ENCODE measurements at regions of chr17 and their contacts with region 1.

Region 1: GRCh38 chr17:58631523-58632323 is 60.1 kb downstream of the TEX14 start:
- DNase-seq: peak; percentile 88
- H3K4me3 ChIP-seq: peak overlapping the region; percentile 43 to 48
- H3K27ac ChIP-seq: peak overlapping the region; percentile 78 to 92
- H3K4me1 ChIP-seq: peaks cover 0 to 5% of the 10 kb centered on the region in 2 experiments; a peak in 1 of 4 replicates
- H3K27me3 ChIP-seq: no peaks in the 10 kb centered on the region
- CTCF ChIP-seq: peak; percentile 41
- EP300 ChIP-seq: peak; percentile 60 to 67; a peak in 3 of 4 replicates
- RAD21 ChIP-seq: peak; percentile 49

Region 2: DNA sequence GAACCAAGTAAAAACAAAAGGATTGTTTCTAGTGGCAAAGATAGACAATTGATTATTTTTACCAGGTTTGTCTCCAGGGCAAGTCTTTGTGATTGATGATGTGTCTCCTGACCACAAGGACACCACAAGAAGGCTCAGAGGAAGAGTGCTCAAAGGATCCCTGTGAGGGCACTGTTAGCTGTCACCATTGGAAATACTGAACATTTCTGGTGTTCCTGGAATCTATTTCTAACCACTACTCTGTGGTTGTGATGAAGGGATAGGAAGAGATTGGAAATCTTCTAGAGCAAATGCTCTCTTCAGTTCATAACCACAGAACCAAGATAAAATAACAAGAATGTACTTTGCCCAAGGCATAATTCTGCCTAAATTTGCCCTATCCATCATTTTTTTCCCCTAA is 229.7 kb before region 1 on chr17:
- CTCF ChIA-PET with region 1: no interaction called
- POLR2A ChIA-PET with region 1: no interaction called
- DNase-seq: no peak
- H3K4me3 ChIP-seq: no peak overlapping the region
- H3K27ac ChIP-seq: no peak overlapping the region
- H3K4me1 ChIP-seq: no peaks in the 10 kb centered on the region
- H3K27me3 ChIP-seq: peaks cover 28% of the 10 kb centered on the region
- CTCF ChIP-seq: no peak
- EP300 ChIP-seq: no peak
- RAD21 ChIP-seq: no peak

Region 3: GRCh38 chr17:58531661-58532554 is 99.8 kb before region 1 on chr17:
- CTCF ChIA-PET with region 1: interaction called, 5 read pairs
- POLR2A ChIA-PET with region 1: interaction called, 11 read pairs
- DNase-seq: peak; percentile 95
- H3K4me3 ChIP-seq: peak overlapping the region; percentile 59 to 74
- H3K27ac ChIP-seq: no peak overlapping the region
- H3K4me1 ChIP-seq: peaks cover 5 to 21% of the 10 kb centered on the region in 2 experiments; a peak in 2 of 4 replicates
- H3K27me3 ChIP-seq: no peaks in the 10 kb centered on the region
- CTCF ChIP-seq: no peak
- EP300 ChIP-seq: no peak
- RAD21 ChIP-seq: no peak

Region 4: DNA sequence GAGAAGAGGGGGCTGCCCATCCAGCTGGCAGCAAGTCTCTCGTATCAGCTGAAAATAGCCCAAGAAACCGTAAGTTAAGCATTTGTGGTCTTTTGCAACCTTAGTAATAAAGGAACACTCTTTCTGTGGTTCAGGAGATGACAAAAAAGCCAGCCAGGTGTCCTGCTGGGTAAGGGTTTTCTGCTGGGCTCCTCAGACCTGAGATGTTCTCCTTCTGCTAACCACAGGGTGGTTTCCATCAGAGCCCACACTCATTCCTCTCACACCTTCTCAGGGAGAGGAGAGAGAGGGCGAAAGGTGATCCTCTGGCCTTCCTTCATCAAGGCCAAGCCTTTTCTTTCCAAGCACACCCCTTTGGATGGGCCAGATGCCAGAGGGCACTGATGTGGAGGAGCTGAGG is 10.5 kb before region 1 on chr17:
- CTCF ChIA-PET with region 1: interaction called, 6 read pairs
- POLR2A ChIA-PET with region 1: interaction called, 12 read pairs
- DNase-seq: no peak
- H3K4me3 ChIP-seq: no peak overlapping the region
- H3K27ac ChIP-seq: no peak overlapping the region
- H3K4me1 ChIP-seq: no peaks in the 10 kb centered on the region
- H3K27me3 ChIP-seq: peaks cover 10% of the 10 kb centered on the region; the same call in 1 of the 2 replicates
- CTCF ChIP-seq: no peak
- EP300 ChIP-seq: no peak
- RAD21 ChIP-seq: no peak

Region 5: DNA sequence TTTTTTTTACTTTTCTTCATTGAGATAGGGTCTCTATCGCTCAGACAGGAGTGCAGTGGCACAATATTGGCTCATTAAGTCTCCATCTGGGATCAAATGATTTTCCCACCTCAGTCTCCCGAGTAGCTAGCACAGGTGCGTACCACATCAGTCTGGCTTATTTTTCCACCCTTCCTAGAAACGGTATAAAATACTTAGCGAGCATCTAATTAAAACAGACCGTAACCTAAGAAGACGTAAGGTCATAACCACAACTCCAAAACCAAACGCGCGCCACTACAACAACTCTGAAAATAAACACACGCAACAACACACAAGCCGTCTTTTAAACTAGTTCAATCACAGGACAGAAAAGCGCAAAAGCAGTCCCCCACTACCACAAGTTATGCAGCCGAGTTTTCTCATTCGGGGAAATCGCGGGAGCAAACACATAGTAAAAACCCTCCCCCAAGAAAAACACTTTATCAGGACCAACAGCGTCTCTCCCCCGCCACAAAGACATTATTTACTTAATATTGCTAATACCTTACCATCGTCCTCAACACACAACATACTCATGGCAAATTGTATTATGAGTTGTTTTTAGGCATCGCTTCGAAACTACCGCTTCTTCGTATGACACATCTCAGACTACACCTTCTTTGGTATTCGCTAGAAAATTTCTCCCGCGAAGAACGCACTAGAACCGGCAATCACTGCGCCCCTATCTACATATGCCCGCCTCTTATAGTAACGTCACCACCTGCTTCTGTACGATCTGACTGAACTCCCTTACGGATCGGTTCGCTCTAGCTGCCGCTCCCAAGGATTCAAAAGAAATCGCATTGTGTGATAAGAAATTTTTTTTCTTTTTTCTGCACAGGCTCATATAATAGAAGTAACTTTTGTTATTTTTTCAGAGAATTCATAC is 27.3 kb after region 1 on chr17:
- CTCF ChIA-PET with region 1: interaction called, 9 read pairs
- POLR2A ChIA-PET with region 1: interaction called, 64 read pairs
- DNase-seq: peak; percentile 93
- H3K4me3 ChIP-seq: peak overlapping the region; percentile 50 to 59
- H3K27ac ChIP-seq: peak overlapping the region; percentile 76 to 97
- H3K4me1 ChIP-seq: no peaks in the 10 kb centered on the region; a peak in 1 of 4 replicates
- H3K27me3 ChIP-seq: no peaks in the 10 kb centered on the region
- CTCF ChIP-seq: no peak
- EP300 ChIP-seq: peak; percentile 75 to 86
- RAD21 ChIP-seq: 0 out of 2 replicates have a peak, but pooled peaks have one; percentile 28